ENCODE measurements at regions of chrX and their contacts with region 1.

Region 1: DNA sequence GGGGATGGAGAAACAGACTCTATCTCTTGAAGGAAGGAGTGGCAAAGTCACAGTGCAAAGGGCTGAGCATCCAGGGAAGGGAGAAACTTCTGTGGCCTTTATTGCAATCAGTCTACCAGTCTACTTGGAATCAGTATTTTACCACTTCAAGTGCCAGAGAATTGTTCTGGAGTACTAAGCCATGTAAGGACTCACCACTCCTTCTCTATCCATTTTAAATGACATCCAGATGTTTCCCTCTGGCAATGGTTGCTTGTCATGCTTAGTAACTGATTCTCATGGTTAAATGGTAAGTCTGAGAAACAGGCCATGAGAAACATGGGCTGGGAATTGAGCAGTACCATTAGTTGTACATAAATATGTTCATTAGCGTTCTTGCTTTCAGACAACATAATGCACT is 21.1 kb upstream of the SMIM10 start:
- DNase-seq: no peak
- H3K4me3 ChIP-seq: no peak overlapping the region
- H3K27ac ChIP-seq: no peak overlapping the region
- H3K4me1 ChIP-seq: no peaks in the 10 kb centered on the region
- H3K27me3 ChIP-seq: no peaks in the 10 kb centered on the region
- CTCF ChIP-seq: no peak
- POLR2A ChIP-seq: no peak

Region 2: DNA sequence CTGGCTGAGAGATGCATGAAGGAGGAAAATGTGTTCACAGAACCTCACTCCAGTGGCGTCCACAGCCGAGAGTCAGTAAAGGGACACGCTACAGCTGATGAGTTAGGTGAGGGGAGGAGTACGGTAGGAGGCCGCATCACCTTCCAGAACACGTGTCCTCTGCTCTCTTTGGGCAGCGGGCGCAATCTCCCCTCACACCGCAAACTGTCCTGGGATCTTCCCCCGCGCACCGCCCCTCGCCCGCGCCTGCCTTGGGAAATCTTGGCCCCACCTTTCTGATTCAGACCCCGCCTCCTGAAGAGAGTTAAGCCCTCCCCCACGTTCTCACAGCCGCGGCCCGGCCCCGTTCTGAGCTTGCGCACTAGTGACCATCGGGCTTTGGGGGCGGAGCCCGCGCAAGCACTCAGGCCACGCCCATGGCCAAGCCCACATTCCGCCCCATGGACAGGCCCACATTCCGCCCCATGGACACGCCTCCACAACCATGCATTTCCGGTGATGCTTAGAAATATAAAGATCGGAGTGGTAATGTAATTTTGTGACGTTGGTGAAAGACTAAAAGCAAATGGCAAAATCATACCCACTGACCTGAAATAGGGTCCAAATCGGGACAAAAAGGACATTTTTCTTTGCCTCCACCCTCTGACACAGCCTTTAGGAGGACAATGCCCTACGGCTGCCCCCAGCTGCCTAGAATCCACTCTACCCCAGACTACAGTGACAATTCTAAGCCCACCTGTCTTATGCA is 34.3 kb after region 1 on chrX:
- CTCF ChIA-PET with region 1: interaction called, 7 read pairs
- POLR2A ChIA-PET with region 1: no interaction called
- dilution Hi-C with region 1: no loop called
- intact Hi-C with region 1: loop called (anchors 1 kb)
- DNase-seq: peak; percentile 90
- H3K4me3 ChIP-seq: peak overlapping the region in 2 of 3 experiments; percentile 33 to 60
- H3K27ac ChIP-seq: no peak overlapping the region
- H3K4me1 ChIP-seq: peaks cover 4% of the 10 kb centered on the region
- H3K27me3 ChIP-seq: peaks cover 1 to 4% of the 10 kb centered on the region in 2 experiments
- CTCF ChIP-seq: no peak
- POLR2A ChIP-seq: no peak

Region 3: DNA sequence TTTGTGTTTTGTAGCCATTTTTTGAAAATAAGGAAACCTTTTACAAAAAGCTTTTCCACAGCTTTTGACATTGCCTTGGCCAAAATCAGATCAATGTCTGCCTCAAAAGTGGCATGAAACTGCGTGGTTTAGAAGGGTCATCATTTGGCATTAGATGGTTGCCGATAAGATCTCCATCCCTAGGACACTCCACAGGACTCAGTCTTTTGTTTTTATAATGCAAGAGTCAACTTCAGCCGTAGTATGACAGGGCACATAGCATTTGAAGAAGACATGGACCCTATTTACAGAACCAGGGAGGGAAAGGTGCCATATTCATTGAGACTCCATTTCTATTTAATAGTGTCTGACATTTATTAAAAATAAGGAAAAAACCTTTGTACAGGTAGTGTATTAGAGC is 80.9 kb after region 1 on chrX:
- CTCF ChIA-PET with region 1: no interaction called
- POLR2A ChIA-PET with region 1: no interaction called
- dilution Hi-C with region 1: no loop called
- intact Hi-C with region 1: loop called (anchors 1 kb)
- DNase-seq: no peak
- H3K4me3 ChIP-seq: peak overlapping the region in 1 of 3 experiments; percentile 59
- H3K27ac ChIP-seq: peak overlapping the region; percentile 17
- H3K4me1 ChIP-seq: peaks cover 6% of the 10 kb centered on the region
- H3K27me3 ChIP-seq: no peaks in the 10 kb centered on the region
- CTCF ChIP-seq: no peak
- POLR2A ChIP-seq: no peak

Region 4: DNA sequence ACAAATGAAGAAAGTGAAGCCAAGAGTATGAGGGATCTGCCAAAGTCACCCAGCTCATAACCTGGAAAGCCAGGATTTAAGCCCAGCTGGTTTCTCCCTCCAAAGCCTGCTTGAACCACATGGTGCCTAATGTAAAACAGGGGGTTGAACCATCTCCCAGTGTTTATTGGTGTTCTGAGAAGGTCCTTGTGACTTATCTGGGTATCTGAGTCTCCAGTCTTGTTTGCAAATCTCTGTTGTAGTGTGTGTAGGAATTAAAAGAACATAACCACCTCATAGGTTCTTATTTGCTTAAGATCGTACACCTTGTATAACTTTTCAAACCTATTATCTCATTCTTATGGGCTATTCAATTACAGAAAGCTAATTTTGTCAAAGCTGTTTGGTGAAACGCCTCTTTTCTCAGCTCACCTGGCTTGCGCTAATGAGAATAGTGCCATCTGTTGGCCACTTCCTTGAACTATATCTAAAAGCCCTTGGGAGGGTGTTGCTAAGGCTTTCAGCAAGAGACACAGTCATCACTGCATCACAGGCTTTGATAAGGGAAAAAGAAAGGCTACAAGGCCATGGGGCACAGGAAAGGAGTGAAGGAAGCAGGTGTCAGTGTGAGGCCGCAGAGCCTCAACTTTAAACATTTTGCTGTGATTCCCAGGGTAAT is 116.6 kb after region 1 on chrX:
- CTCF ChIA-PET with region 1: interaction called, 15 read pairs
- POLR2A ChIA-PET with region 1: no interaction called
- dilution Hi-C with region 1: no loop called
- intact Hi-C with region 1: loop called (anchors 1 kb)
- DNase-seq: peak; percentile 59
- H3K4me3 ChIP-seq: no peak overlapping the region
- H3K27ac ChIP-seq: no peak overlapping the region
- H3K4me1 ChIP-seq: no peaks in the 10 kb centered on the region
- H3K27me3 ChIP-seq: no peaks in the 10 kb centered on the region
- CTCF ChIP-seq: peak; percentile 45
- POLR2A ChIP-seq: no peak